ENCODE measurements at regions of chr5 and their contacts with region 1.

Region 1: DNA sequence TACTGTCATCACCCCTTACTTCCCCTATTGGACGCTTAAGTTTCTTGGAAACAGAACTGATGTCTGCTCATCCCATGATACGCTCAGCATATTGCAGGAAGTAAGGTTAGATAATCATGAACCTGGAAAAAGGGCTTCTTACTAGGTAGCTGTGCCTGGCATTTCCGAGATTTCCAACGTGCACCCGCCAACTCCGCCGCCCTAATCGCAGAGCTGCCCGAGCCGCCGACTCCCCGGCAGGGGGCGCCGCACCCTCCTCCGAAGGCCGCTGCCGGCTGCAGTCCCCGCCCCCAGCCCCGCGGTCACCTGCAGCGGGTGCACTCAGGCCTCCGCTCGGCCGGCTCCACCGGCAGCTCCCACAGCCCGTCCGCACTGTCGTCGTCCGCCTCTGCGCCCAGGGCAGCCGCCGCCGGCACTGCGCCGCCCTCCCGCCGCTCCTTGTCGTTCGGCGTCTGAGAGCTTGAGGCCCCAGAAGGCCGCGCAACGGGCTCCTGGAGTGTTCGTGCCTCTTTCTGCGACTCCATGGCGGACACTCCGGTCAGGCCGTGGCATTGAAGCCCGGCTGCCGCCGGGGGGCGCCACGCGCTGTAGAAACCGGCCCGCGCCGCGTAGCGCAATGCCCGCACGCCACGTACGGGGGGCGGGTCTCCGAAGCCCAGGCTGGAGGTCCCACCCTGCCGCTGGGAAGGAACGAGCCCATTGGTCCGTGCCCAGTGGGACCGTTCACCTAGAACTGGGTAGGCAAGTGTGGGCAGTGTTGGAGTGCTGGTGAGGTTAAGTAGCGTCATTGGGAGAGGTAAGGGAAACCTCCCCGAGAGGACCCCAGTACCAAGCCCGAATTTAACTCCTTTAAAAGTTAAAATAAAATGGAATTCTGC is at the start of gene DTWD2:
- DNase-seq: peak; percentile 85 to 96 (median 93)
- H3K4me3 ChIP-seq: peak within 1 kb of the TSS; percentile 59 to 94 (median 81)
- H3K27ac ChIP-seq: peak within 1 kb of the TSS; percentile 85 to 100 (median 95)
- H3K27me3 ChIP-seq: no peaks in the 10 kb centered on the region
- CTCF ChIP-seq: peak; percentile 56 to 100 (median 92)
- total RNA-seq, gene DTWD2: 5.6 to 15.5 (median 9.1) TPM

Region 2: DNA sequence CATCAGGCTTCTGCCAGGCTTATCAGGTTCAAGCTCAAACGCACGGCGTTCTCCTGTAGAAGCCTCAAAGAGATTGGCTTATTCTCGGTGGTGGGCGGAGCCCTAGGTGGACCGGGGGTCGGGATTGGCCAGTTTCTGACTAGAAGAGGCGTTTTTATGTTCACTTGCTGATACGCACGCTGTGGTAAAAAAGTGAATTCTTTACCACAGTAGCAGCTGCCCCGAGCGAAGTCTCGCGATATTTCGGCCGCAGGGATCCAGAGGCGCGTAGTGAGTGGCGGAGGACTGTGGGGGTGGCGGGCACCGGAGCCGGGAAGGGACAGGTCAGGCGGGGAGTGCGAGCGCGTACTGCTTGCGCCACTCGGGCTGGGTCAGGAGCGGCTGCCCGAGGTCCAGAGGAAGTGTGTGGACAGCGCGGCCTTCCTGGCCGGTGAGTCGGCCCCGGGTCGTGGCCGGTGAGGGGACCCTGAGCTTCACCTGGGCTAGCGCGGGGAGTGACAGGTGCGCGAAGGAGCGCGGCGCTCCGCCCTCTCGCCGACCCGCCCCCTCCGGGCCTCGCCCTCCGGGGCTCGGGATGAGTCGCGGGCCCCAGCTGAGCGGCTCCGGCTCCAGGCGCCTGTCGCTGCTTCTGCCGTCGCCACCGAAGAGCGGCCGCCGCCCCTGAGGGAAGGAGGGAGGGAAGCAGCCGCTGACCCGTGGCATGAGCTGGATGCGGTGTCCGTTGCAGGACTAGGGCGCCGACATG is 82.8 kb after region 1 on chr5 and contains the start of gene DMXL1:
- intact Hi-C with region 1: loop called (anchors 1 to 2 kb)
- DNase-seq: peak; percentile 97 to 100 (median 99)
- H3K4me3 ChIP-seq: peak within 1 kb of the TSS; percentile 58 to 99 (median 94)
- H3K27ac ChIP-seq: peak within 1 kb of the TSS; percentile 68 to 99 (median 97)
- H3K27me3 ChIP-seq: no peaks in the 10 kb centered on the region
- CTCF ChIP-seq: peak in 21 of 56 donors; percentile 2 to 43 (median 11)
- total RNA-seq, gene DMXL1: 59.0 to 112 (median 84.6) TPM

Region 3: GRCh38 chr5:119267958-119268386 is 279.7 kb after region 1 on chr5:
- intact Hi-C with region 1: loop called (anchors 2 to 5 kb)
- DNase-seq: peak; percentile 67 to 93 (median 91)
- H3K4me3 ChIP-seq: peak overlapping the region; percentile 62 to 96 (median 81)
- H3K27ac ChIP-seq: peak overlapping the region in 58 of 59 donors; percentile 9 to 91 (median 82)
- H3K27me3 ChIP-seq: no peaks in the 10 kb centered on the region
- CTCF ChIP-seq: peak in 41 of 56 donors; percentile 1 to 78 (median 54)

Region 4: GRCh38 chr5:119332978-119333401 is 344.8 kb after region 1 on chr5:
- intact Hi-C with region 1: loop called in 1 of 2 experiments (anchors 10 kb)
- DNase-seq: no peak
- H3K4me3 ChIP-seq: no peak overlapping the region
- H3K27ac ChIP-seq: no peak overlapping the region
- H3K27me3 ChIP-seq: no peaks in the 10 kb centered on the region
- CTCF ChIP-seq: no peak

Region 5: DNA sequence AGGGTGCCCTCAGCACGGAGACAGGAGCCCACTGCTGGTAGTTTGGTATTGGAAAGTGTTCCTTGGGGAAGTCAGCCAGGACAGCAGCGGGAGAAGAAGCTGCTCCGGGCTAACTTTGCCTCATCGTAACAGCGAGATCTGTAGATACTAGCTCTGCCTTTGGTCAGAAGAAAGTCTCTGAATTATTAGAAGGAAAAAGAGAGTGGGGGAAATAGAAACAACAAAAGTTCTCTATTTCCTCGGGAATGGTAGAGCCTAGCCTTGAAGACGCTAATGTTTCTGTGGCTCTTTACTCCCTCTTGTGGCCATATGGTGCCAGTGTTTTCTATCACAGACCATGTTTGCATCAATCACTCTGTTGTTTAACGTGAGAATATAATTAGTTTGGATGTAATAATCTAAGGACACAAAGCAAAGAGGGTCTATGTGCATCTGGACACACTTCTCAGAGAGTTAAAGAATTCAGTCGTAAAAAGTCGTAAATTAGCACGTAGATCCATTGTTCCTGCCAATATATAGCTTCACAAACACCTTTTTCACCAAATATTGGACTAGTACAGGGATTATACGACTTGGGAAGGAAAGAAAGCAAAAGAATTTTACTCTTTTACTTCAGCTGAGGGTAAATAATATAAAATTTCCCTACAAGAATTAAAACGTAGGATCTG is 423.8 kb after region 1 on chr5:
- intact Hi-C with region 1: loop called (anchors 1 to 2 kb)
- DNase-seq: peak in 7 of 10 donors; percentile 25 to 73 (median 45)
- H3K4me3 ChIP-seq: peak overlapping the region; percentile 27 to 75 (median 59)
- H3K27ac ChIP-seq: peak overlapping the region in 46 of 59 donors; percentile 8 to 85 (median 59)
- H3K27me3 ChIP-seq: peaks cover 0 to 8% (median 0%) of the 10 kb centered on the region in 45 donors
- CTCF ChIP-seq: peak in 55 of 56 donors; percentile 86 to 99 (median 96)

Region 6: GRCh38 chr5:119452373-119453039 is 464.3 kb after region 1 on chr5 and contains the start of gene HSD17B4:
- intact Hi-C with region 1: loop called in 1 of 2 experiments (anchors 2 kb)
- DNase-seq: peak; percentile 91 to 97 (median 94)
- H3K4me3 ChIP-seq: peak within 1 kb of the TSS; percentile 59 to 99 (median 88)
- H3K27ac ChIP-seq: peak within 1 kb of the TSS; percentile 53 to 96 (median 86)
- H3K27me3 ChIP-seq: no peaks in the 10 kb centered on the region
- CTCF ChIP-seq: peak in 26 of 56 donors; percentile 5 to 55 (median 22)
- total RNA-seq, gene HSD17B4: 152 to 375 (median 249) TPM

Region 7: GRCh38 chr5:119743927-119744326 is 755.7 kb after region 1 on chr5:
- intact Hi-C with region 1: loop called in 1 of 2 experiments (anchors 10 kb)
- DNase-seq: no peak
- H3K4me3 ChIP-seq: no peak overlapping the region
- H3K27ac ChIP-seq: no peak overlapping the region
- H3K27me3 ChIP-seq: no peaks in the 10 kb centered on the region
- CTCF ChIP-seq: peak in 54 of 56 donors; percentile 17 to 71 (median 49)

Measured in dorsolateral prefrontal cortex (tissue), 120 donors.